Aorta (tissue), 5 donors: ENCODE measurements at regions of chr16 and their contacts with region 1.

Region 1: DNA sequence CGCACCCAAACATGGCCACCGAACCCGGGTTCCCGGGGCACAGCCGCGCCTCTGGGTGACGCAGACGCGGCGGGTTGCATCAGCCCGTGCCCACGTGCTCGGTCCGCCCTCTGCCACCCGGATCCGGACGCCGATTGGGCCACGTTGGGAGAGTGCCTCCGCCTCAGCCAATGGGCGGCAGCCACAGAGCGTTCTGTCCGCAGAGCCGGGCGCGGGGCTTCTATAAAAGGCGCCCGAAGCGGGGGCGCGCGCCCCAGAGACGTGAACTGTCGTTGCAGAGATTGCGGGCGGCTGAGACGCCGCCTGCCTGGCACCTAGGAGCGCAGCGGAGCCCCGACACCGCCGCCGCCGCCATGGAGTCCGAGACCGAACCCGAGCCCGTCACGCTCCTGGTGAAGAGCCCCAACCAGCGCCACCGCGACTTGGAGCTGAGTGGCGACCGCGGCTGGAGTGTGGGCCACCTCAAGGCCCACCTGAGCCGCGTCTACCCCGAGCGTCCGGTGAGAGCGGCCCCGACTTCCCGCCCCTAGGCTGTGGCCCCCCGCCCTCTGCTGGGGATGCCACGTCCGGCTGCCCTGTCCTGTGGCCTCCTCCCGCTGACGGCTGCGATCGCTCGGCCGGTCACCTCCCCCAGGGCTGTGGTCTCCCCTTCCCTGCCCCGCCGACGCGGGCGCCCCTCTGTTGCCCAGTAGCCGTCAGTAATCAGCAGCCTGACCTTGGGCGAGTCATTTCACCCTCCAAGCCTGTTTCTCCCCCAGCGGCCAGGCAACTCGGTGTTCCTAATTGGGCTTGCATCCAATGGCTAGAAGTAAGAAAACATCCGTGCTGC is at the start of gene HERPUD1:
- DNase-seq: peak; percentile 100
- ATAC-seq: peak; percentile 97
- H3K4me3 ChIP-seq: peak within 1 kb of the TSS; percentile 81 to 90
- H3K27ac ChIP-seq: peak within 1 kb of the TSS; percentile 87 to 88
- H3K4me1 ChIP-seq: no peaks in the 10 kb centered on the region
- H3K27me3 ChIP-seq: no peaks in the 10 kb centered on the region
- total RNA-seq, gene HERPUD1: 152 to 173 TPM

Region 2: GRCh38 chr16:56988948-56989945 is 57.1 kb after region 1 on chr16 and contains the start of gene NLRC5:
- intact Hi-C with region 1: loop called in 1 of 2 experiments (anchors 5 kb)
- DNase-seq: peak; percentile 94 to 96
- ATAC-seq: peak; percentile 93
- H3K4me3 ChIP-seq: peak within 1 kb of the TSS; percentile 69 to 77
- H3K27ac ChIP-seq: peak within 1 kb of the TSS in 1 of 2 donors; percentile 57
- H3K4me1 ChIP-seq: no peaks in the 10 kb centered on the region
- H3K27me3 ChIP-seq: no peaks in the 10 kb centered on the region
- total RNA-seq, gene NLRC5: 49.3 to 82.9 TPM

Region 3: GRCh38 chr16:57185944-57186871 is 254.1 kb after region 1 on chr16 and contains the starts of genes PSME3IP1 and RSPRY1:
- intact Hi-C with region 1: loop called in 1 of 2 experiments (anchors 5 kb)
- DNase-seq: peak; percentile 98 to 99
- ATAC-seq: peak; percentile 99
- H3K4me3 ChIP-seq: peak within 1 kb of the TSS; percentile 58 to 88
- H3K27ac ChIP-seq: peak within 1 kb of the TSS; percentile 79 to 88
- H3K4me1 ChIP-seq: peaks cover under 1 to 6% of the 10 kb centered on the region in 2 donors
- H3K27me3 ChIP-seq: no peaks in the 10 kb centered on the region
- total RNA-seq, gene PSME3IP1: 59.8 to 85.7 TPM
- total RNA-seq, gene RSPRY1: 30.9 to 32.5 TPM